Activated T-helper 1 cell treated with anti-CD3 and anti-CD28 coated beads, Interleukin-12 subunit alpha, Interleukin-12 subunit beta, Interleukin-2, Interleukin-4 antibody, amounts not matched to agents 30 ng/mL and 10 ng/mL and 1 ng/mL, durations not matched to agents 14 hours and 24 hours and 36 hours (primary cell): ENCODE measurements at regions of chr1 and their contacts with region 1.

Region 1: GRCh38 chr1:40774266-40774998 is 9.2 kb upstream of the KCNQ4 start:
- DNase-seq: peak; percentile 49
- H3K4me3 Mint-ChIP-seq: no peak overlapping the region
- H3K27ac Mint-ChIP-seq: peak overlapping the region; percentile 42
- H3K4me1 Mint-ChIP-seq: peaks cover 24% of the 10 kb centered on the region
- H3K27me3 Mint-ChIP-seq: no peaks in the 10 kb centered on the region

Region 2: GRCh38 chr1:40849801-40850592 is 75.6 kb after region 1 on chr1:
- intact Hi-C with region 1: loop called (anchors 1 kb)
- DNase-seq: peak; percentile 70
- H3K4me3 Mint-ChIP-seq: no peak overlapping the region
- H3K27ac Mint-ChIP-seq: peak overlapping the region; percentile 4
- H3K4me1 Mint-ChIP-seq: peaks cover 34% of the 10 kb centered on the region
- H3K27me3 Mint-ChIP-seq: no peaks in the 10 kb centered on the region

Region 3: DNA sequence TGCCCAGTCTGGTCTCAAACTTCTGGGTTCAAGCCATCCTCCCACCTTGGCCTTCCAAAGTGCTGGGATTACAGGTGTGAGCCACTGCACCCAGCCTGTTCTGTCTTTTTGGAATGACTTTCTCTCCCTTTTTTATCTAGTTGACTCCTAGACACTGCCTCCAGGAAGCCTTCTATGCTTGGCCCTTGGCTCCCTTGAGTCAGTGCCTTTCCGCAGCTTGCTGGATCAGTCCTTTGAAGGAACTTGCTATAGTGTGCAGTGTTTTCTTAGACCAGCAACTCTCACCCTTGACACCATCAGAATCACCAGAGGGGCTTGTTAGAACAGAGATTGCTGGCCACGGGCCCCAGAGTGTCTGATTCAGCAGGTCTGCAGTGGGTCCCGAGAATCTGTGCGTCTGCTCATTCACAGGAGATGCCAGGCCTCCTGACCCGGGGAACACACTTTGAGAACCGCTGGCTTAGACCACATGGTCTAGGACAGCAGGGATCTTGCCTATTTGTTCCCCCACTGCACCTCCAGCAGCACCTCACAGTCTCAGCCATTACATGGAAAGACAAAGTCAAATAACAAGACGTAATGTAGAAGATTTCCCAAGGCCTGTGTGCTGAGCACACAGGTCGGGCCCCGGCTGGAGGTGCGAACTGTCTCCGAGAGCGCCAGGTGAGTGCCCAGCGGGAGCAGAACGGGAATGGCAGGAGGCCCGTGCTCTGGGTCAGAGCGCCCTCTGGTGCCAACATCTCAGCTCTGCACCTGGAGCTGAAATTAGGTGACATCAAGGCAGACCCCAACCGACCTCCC is 177.7 kb after region 1 on chr1:
- intact Hi-C with region 1: loop called (anchors 1 kb)
- DNase-seq: peak; percentile 45
- H3K4me3 Mint-ChIP-seq: no peak overlapping the region
- H3K27ac Mint-ChIP-seq: no peak overlapping the region
- H3K4me1 Mint-ChIP-seq: peaks cover 8% of the 10 kb centered on the region
- H3K27me3 Mint-ChIP-seq: peaks cover 15% of the 10 kb centered on the region